Endothelial cell of umbilical vein (primary cell): ENCODE measurements at regions of chr1 and their contacts with region 1.

Region 1: DNA sequence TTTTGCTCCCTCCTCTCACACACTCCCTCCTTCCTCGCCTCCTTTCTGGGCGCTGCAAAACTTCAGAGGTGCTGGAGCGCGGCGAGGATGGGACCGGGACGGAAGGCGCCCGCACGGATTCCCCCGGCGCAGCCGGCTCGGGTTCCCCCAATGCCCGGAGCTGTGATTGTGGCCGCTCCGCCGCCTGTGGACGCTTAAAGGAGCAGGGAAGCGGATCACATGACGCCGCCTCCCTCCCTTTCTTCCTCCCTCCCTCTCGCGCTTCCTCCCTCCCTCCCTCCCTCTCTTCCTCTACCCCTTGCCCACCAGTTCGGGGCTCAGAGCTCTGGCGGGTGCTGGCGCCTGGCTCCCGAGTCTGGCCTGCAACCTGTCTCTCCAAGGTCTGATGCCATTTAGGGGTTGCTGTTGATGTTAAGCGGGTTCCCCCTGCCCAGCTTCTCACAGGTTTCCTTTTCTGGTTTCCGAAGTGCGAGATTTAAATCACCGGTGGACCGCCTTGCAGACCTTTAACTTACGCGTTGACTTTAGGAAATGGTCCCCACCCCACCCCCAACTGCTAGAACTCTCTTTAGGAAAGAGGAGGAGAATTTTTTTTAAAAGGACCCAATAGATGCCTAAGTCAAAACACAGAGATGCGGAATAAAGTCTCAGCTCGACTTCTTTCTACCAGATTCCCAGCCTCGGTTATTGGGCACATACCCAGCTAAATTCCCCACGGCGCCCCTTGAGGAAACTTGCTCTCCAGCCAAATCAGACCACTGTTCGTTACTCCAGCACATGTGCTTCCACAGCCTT is at the start of gene WLS:
- DNase-seq: peak; percentile 80
- H3K4me3 ChIP-seq: peak within 1 kb of the TSS; percentile 67 to 100 (median 93)
- H3K27ac ChIP-seq: peak within 1 kb of the TSS; percentile 85
- H3K4me1 ChIP-seq: peaks cover 29% of the 10 kb centered on the region
- H3K27me3 ChIP-seq: no peaks in the 10 kb centered on the region
- CTCF ChIP-seq: peak; percentile 5 to 16
- POLR2A ChIP-seq: peak; percentile 98
- total RNA-seq, gene WLS: 163 and 199 TPM in 2 replicates

Region 2: GRCh38 chr1:68206848-68207689 is 25.5 kb before region 1 on chr1:
- CTCF ChIA-PET with region 1: interaction called, 9 read pairs
- POLR2A ChIA-PET with region 1: interaction called, 20 read pairs
- dilution Hi-C with region 1: no loop called
- intact Hi-C with region 1: loop called (anchors 1 kb)
- DNase-seq: peak; percentile 93
- H3K4me3 ChIP-seq: peak overlapping the region in 1 of 3 experiments; percentile 40
- H3K27ac ChIP-seq: peak overlapping the region; percentile 91
- H3K4me1 ChIP-seq: peaks cover 34% of the 10 kb centered on the region
- H3K27me3 ChIP-seq: no peaks in the 10 kb centered on the region
- CTCF ChIP-seq: no peak
- POLR2A ChIP-seq: no peak

Region 3: DNA sequence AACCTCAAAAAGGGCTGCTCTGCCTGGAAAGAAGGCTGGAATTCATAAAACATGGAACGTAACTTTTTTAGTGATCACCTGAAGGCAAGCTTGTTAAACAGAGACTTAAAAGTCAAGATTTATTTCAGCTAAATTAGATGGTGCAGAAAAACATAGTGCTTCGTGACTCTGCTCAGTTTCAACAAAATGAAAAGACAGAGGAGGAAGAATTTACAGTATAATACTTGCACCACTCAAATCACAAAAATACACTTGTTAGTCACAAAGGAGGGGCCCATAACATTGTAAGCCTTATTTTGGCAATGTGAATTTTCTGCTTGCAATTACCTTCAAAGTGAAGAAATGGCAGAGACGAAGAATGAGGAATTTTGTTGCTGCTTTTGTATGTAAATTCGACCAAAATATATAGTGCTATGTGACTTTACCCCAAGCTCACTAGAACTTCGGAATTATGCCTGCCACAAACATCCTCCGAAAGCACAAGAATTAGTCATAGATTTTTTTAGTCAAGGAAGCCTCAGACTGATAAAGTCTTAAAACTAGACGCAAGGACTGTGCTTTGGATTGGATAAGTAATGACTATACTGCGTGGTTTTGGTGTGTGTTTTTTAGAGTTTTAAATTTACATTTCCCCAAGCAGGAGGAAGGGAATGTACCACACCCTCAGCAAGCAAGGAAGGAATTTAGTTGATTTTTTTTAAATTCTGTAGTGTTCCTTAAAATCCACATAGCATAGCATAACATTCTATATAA is 10.8 kb before region 1 on chr1:
- CTCF ChIA-PET with region 1: interaction called, 3 read pairs
- POLR2A ChIA-PET with region 1: interaction called, 5 read pairs
- dilution Hi-C with region 1: no loop called
- intact Hi-C with region 1: loop called (anchors 1 kb)
- DNase-seq: peak; percentile 35
- H3K4me3 ChIP-seq: no peak overlapping the region
- H3K27ac ChIP-seq: no peak overlapping the region
- H3K4me1 ChIP-seq: peaks cover 14% of the 10 kb centered on the region
- H3K27me3 ChIP-seq: no peaks in the 10 kb centered on the region
- CTCF ChIP-seq: no peak
- POLR2A ChIP-seq: no peak

Region 4: GRCh38 chr1:68321084-68321685 is 88.6 kb after region 1 on chr1:
- CTCF ChIA-PET with region 1: interaction called, 12 read pairs
- POLR2A ChIA-PET with region 1: no interaction called
- dilution Hi-C with region 1: no loop called
- intact Hi-C with region 1: loop called (anchors 2 kb)
- DNase-seq: peak; percentile 70
- H3K4me3 ChIP-seq: no peak overlapping the region
- H3K27ac ChIP-seq: no peak overlapping the region
- H3K4me1 ChIP-seq: no peaks in the 10 kb centered on the region
- H3K27me3 ChIP-seq: no peaks in the 10 kb centered on the region
- CTCF ChIP-seq: peak; percentile 72 to 88
- POLR2A ChIP-seq: no peak

Region 5: DNA sequence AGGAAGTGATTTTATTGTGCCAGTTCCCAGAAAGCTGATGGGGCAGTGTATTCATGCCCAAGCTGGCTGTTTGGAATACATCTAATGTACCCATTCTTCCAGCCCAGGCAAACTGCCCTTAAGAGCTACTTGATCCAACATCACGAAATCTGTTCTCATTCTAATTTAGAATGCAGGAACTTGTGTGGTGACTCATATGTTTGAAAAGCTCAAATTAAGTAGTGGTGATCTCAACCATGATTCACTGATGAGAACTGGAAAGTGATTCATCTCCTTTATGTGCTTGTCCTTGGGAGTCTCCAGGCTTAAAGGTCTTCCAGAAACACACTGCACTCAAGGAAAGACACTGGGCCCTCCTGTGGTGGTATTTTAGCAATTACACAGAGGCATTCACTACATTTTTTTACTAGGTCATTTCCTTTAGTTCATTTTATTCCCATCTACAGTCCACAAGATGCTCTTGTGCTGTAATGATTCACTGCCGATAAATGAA is 151.8 kb after region 1 on chr1:
- CTCF ChIA-PET with region 1: interaction called, 4 read pairs
- POLR2A ChIA-PET with region 1: interaction called, 3 read pairs
- dilution Hi-C with region 1: no loop called
- intact Hi-C with region 1: loop called (anchors 2 kb)
- DNase-seq: peak; percentile 98
- H3K4me3 ChIP-seq: peak overlapping the region in 1 of 3 experiments; percentile 18
- H3K27ac ChIP-seq: peak overlapping the region; percentile 97
- H3K4me1 ChIP-seq: peaks cover 30% of the 10 kb centered on the region
- H3K27me3 ChIP-seq: no peaks in the 10 kb centered on the region
- CTCF ChIP-seq: peak; percentile 32 to 35
- POLR2A ChIP-seq: no peak